ENCODE measurements at regions of chr1 and their contacts with region 1.

Region 1: DNA sequence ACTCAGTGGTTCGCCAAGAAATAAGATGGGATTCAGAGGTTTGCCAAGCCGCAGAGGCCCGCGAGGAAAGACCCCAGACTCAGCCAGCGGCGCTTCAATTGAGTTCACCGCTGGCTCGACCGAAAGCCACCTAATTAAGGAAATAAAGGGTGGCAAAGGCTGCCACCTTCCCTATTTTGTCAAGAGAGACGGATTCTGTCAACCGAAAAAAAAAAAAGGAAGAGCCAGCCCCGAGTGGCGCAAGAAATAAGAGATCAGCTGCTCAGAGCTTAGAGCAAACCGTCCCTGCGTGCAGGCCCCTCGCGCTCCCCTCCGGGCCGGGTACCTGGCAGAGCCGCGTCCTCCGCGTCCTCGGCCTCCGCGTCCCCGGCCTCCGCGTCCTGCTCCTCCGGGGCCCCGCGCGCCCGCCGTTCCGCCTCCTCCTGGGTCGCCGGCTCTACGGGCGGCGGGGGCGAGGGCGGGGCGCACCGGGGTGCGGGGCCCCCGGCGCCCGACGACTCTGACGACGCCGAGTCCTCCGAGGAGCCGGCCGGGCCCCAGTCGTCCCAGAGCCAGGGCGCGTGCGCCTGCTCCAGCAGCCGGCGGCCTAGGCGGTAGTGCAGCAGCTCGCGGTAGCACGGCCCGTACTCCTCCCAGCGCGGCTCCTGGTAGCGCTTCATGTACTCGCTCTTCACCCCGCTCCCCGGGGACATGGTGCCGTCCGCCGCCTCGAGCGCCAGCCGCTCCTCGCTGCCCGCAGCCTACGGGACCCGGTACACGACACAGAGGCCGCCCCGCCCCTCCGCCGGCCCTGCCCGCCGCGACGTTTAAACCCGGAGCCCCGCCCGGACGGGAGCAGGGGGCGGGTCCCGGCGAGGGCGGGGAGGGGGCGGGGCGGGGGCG is 832 bp downstream of the CCSAP start:
- DNase-seq: peak; percentile 79 to 91 (median 85)
- H3K4me3 ChIP-seq: peak overlapping the region in 3 of 4 donors; percentile 40 to 97 (median 93)
- H3K27ac ChIP-seq: peak overlapping the region in 4 of 5 donors; percentile 54 to 96 (median 88)
- H3K4me1 ChIP-seq: peaks cover 0 to 18% of the 10 kb centered on the region in 2 donors
- H3K27me3 ChIP-seq: no peaks in the 10 kb centered on the region
- CTCF ChIP-seq: peak in 1 of 6 experiments; percentile 11
- POLR2A ChIP-seq: peak in 1 of 2 donors; percentile 56

Region 2: GRCh38 chr1:229270547-229271447 is 71.2 kb before region 1 on chr1 and contains the start of gene RAB4A:
- intact Hi-C with region 1: loop called (anchors 5 to 10 kb)
- DNase-seq: peak; percentile 85 to 91 (median 88)
- H3K4me3 ChIP-seq: peak within 1 kb of the TSS; percentile 27 to 88 (median 62)
- H3K27ac ChIP-seq: peak within 1 kb of the TSS in 4 of 5 donors; percentile 31 to 88 (median 72)
- H3K4me1 ChIP-seq: peaks cover 13 to 52% of the 10 kb centered on the region in 2 donors
- H3K27me3 ChIP-seq: no peaks in the 10 kb centered on the region
- CTCF ChIP-seq: peak in 1 of 6 experiments; percentile 1
- POLR2A ChIP-seq: peak in 1 of 2 donors; percentile 86
- total RNA-seq, gene RAB4A: 34.6 to 80.9 (median 49.1) TPM

Region 3: GRCh38 chr1:229410692-229411443 is 68.9 kb after region 1 on chr1:
- intact Hi-C with region 1: no loop called
- DNase-seq: peak; percentile 80 to 93 (median 89)
- H3K4me3 ChIP-seq: no peak overlapping the region
- H3K27ac ChIP-seq: peak overlapping the region in 3 of 5 donors; percentile 48 to 74 (median 62)
- H3K4me1 ChIP-seq: peaks cover 22 to 33% of the 10 kb centered on the region in 2 donors
- H3K27me3 ChIP-seq: peaks cover 10% of the 10 kb centered on the region
- CTCF ChIP-seq: no peak
- POLR2A ChIP-seq: peak in 1 of 2 donors; percentile 48

Region 4: DNA sequence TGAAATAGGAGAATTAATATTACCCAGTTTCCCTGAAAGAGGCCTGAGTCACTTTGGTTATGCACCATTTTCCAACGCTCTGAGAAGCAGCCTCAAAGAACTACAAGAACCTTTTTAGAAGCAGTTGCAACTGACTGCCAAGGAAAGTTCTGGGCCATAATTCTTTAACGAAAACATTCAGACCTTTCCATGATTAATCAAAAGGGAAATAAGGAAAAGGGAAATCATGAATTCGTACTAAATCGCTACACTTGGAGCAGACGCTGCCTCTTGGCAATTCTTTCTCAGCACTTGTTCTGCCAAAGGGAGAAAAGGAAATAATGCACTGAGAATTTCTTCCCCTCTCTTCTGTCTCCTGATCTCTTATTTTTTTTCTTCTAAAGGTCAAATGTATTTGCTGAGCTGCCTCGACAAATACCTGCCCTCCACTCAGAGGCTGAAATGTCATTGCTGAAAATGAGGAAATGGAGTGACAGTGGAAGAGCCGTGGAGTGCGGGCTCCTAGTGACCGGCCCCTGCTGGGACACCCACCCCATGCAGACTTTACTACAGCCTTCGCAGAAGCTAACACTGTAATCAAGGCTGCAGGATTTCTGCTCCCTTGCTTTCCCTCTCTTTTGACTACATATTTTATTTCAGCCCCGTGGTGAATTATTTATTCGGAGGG is 657.1 kb after region 1 on chr1:
- intact Hi-C with region 1: no loop called
- DNase-seq: no peak
- H3K4me3 ChIP-seq: no peak overlapping the region
- H3K27ac ChIP-seq: peak overlapping the region in 1 of 5 donors; percentile 57
- H3K4me1 ChIP-seq: peaks cover 4 to 23% of the 10 kb centered on the region in 2 donors
- H3K27me3 ChIP-seq: no peaks in the 10 kb centered on the region
- CTCF ChIP-seq: no peak
- POLR2A ChIP-seq: no peak

Measured in adrenal gland (tissue), 19 donors.